A549 (cell line): ENCODE measurements at regions of chr15 and their contacts with region 1.

Region 1: GRCh38 chr15:77059786-77060361 is 11.0 kb downstream of the TSPAN3 start:
- DNase-seq: no peak
- ATAC-seq: no peak
- H3K4me3 ChIP-seq: no peak overlapping the region
- H3K27ac ChIP-seq: no peak overlapping the region
- H3K4me1 ChIP-seq: peaks cover 45% of the 10 kb centered on the region
- CTCF ChIP-seq: no peak
- EP300 ChIP-seq: no peak
- POLR2A ChIP-seq: no peak
- RAD21 ChIP-seq: no peak

Region 2: GRCh38 chr15:77034695-77035489 is 25.0 kb before region 1 on chr15:
- CTCF ChIA-PET with region 1: interaction called, 11 read pairs
- POLR2A ChIA-PET with region 1: no interaction called
- DNase-seq: no peak
- ATAC-seq: peak in 1 of 2 experiments; percentile 55; a peak in 3 of 6 replicates
- H3K4me3 ChIP-seq: no peak overlapping the region
- H3K27ac ChIP-seq: no peak overlapping the region
- H3K4me1 ChIP-seq: no peaks in the 10 kb centered on the region
- CTCF ChIP-seq: peak; percentile 61
- EP300 ChIP-seq: no peak
- POLR2A ChIP-seq: no peak
- RAD21 ChIP-seq: peak; percentile 33 to 37; a peak in 2 of 5 replicates